Caco-2 (cell line): ENCODE measurements at regions of chrX and their contacts with region 1.

Region 1: DNA sequence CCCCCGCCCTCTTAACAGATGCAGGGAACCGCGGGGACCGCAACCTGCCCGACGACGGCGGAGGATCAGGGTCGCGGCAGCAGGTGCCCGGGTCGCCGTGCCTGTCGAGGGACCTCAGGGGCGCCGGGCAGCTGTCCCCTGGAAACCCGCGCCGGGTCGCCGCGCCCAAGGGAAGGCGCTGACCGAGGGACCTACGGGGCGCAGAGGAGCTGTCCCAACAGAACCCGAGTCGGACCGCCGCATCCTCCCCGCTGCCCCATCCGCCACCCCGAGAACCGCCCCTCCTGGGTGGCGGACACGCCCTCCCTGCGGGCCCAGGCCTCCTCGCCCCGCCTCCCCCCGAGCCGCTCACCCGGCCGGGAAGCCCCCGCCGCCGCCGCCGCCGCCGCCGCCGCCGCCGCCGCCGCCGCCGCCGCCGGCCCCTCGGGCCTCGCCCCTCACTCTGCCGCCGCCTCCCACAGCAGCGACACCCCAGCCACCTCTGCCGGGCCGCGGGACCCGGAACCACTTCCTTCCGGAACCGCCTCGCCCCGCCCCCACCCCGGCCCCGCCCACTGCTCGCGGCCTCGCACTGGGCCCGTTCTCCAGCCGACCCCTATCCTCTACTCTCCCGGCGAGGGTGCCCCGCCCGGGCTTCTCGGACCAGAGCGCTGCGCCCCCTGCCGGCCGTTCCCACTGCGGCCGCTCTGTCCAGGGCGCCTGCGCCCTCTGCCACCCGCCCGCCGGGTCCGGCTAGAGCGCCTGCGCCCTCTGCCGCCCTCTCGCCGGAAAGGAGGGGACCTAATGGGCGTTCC is at the start of gene BCLAF3:
- DNase-seq: peak; percentile 86 to 94
- H3K4me3 ChIP-seq: peak within 1 kb of the TSS; percentile 71
- H3K4me3 Mint-ChIP-seq: peak within 1 kb of the TSS; percentile 81
- H3K27ac Mint-ChIP-seq: peak within 1 kb of the TSS; percentile 75
- H3K4me1 ChIP-seq: no peaks in the 10 kb centered on the region
- H3K4me1 Mint-ChIP-seq: peaks cover 13% of the 10 kb centered on the region
- H3K27me3 ChIP-seq: no peaks in the 10 kb centered on the region
- H3K27me3 Mint-ChIP-seq: no peaks in the 10 kb centered on the region
- CTCF ChIP-seq: peak; percentile 61 to 75
- total RNA-seq, gene BCLAF3: 5.7 and 7.8 TPM in 2 replicates

Region 2: GRCh38 chrX:19625612-19626011 is 365.1 kb before region 1 on chrX:
- CTCF ChIA-PET with region 1: no interaction called
- POLR2A ChIA-PET with region 1: no interaction called
- intact Hi-C with region 1: no loop called
- DNase-seq: no peak
- H3K4me3 ChIP-seq: no peak overlapping the region
- H3K4me3 Mint-ChIP-seq: no peak overlapping the region
- H3K27ac Mint-ChIP-seq: no peak overlapping the region
- H3K4me1 ChIP-seq: peaks cover 9% of the 10 kb centered on the region
- H3K4me1 Mint-ChIP-seq: peaks cover 7% of the 10 kb centered on the region
- H3K27me3 ChIP-seq: no peaks in the 10 kb centered on the region
- H3K27me3 Mint-ChIP-seq: no peaks in the 10 kb centered on the region
- CTCF ChIP-seq: no peak

Region 3: GRCh38 chrX:19904778-19905367 is 85.9 kb before region 1 on chrX:
- CTCF ChIA-PET with region 1: interaction called, 3 read pairs
- POLR2A ChIA-PET with region 1: no interaction called
- intact Hi-C with region 1: loop called (anchors 1 kb)
- DNase-seq: peak in 1 of 2 experiments; percentile 55
- H3K4me3 ChIP-seq: no peak overlapping the region
- H3K4me3 Mint-ChIP-seq: no peak overlapping the region
- H3K27ac Mint-ChIP-seq: no peak overlapping the region
- H3K4me1 ChIP-seq: no peaks in the 10 kb centered on the region
- H3K4me1 Mint-ChIP-seq: peaks cover 8% of the 10 kb centered on the region
- H3K27me3 ChIP-seq: no peaks in the 10 kb centered on the region
- H3K27me3 Mint-ChIP-seq: no peaks in the 10 kb centered on the region
- CTCF ChIP-seq: peak; percentile 48 to 76

Region 4: GRCh38 chrX:20046223-20046622 is 55.5 kb after region 1 on chrX:
- CTCF ChIA-PET with region 1: no interaction called
- POLR2A ChIA-PET with region 1: no interaction called
- intact Hi-C with region 1: no loop called
- DNase-seq: no peak
- H3K4me3 ChIP-seq: no peak overlapping the region
- H3K4me3 Mint-ChIP-seq: no peak overlapping the region
- H3K27ac Mint-ChIP-seq: no peak overlapping the region
- H3K4me1 ChIP-seq: no peaks in the 10 kb centered on the region
- H3K4me1 Mint-ChIP-seq: no peaks in the 10 kb centered on the region
- H3K27me3 ChIP-seq: no peaks in the 10 kb centered on the region
- H3K27me3 Mint-ChIP-seq: no peaks in the 10 kb centered on the region
- CTCF ChIP-seq: no peak

Region 5: DNA sequence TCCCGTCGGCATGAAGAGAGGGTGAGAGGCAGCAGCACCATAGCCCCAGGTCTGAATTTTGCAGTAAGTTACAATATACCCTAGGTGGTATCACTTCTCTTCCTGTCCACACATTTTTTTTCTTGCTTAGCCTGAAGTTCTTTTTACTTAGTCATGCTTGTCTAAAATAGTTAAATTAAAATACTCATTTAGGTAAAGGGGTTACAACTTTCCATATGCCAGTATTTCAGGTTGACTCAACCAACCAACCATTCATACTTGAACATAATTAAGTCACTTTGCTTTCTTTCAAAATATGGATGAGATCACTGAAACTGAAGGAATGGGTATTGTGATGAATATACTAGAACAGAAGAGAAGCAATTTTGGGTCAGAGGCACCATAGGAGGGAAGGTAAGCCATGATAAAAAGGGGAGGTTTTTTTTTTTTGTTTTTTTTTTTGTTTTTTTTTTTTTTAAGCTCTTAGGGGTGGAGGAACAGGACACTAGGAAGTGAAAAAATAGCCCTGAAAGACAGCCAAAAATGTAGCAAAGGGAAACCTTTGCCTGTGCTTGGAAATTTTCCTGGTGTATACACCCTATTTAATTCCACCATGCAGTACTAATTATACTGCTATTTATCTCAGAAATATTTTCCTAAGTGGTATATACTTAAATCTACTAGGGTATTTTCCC is 234.2 kb after region 1 on chrX:
- CTCF ChIA-PET with region 1: no interaction called
- POLR2A ChIA-PET with region 1: no interaction called
- intact Hi-C with region 1: no loop called
- DNase-seq: no peak
- H3K4me3 ChIP-seq: no peak overlapping the region
- H3K4me3 Mint-ChIP-seq: no peak overlapping the region
- H3K27ac Mint-ChIP-seq: no peak overlapping the region
- H3K4me1 ChIP-seq: peaks cover 28% of the 10 kb centered on the region
- H3K4me1 Mint-ChIP-seq: peaks cover 21% of the 10 kb centered on the region
- H3K27me3 ChIP-seq: no peaks in the 10 kb centered on the region
- H3K27me3 Mint-ChIP-seq: no peaks in the 10 kb centered on the region
- CTCF ChIP-seq: no peak